ENCODE measurements at regions of chr4 and their contacts with region 1.

Region 1: GRCh38 chr4:4256799-4257198 is 8.8 kb upstream of the TMEM128 start:
- DNase-seq: peak in 1 of 5 donors; percentile 25
- H3K4me3 ChIP-seq: no peak overlapping the region
- H3K27ac ChIP-seq: no peak overlapping the region
- H3K4me1 ChIP-seq: no peaks in the 10 kb centered on the region
- H3K27me3 ChIP-seq: no peaks in the 10 kb centered on the region
- CTCF ChIP-seq: no peak
- EP300 ChIP-seq: no peak
- POLR2A ChIP-seq: no peak

Region 2: DNA sequence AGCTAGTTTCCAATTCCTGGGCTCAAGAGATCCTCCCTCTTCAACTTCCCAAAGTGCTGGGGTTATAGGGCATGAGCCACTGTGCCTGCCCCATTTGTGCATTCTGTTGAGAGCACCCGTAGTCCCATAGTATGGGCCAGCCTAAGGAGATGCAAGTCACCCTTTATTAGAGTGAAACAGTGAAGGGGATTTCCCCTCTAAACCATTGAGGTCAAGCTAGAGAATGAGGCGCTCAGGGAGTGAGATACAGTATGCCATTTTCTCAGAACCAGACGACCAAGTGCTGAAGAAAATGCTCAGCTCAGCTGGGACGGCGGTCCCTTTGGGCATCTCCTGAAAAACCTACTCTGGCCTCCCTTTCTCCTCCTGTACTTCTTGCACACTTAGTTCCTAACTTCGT is 1769.2 kb before region 1 on chr4:
- intact Hi-C with region 1: no loop called
- DNase-seq: no peak
- H3K4me3 ChIP-seq: no peak overlapping the region
- H3K27ac ChIP-seq: no peak overlapping the region
- H3K4me1 ChIP-seq: peaks cover 10% of the 10 kb centered on the region
- H3K27me3 ChIP-seq: no peaks in the 10 kb centered on the region
- CTCF ChIP-seq: no peak
- EP300 ChIP-seq: no peak
- POLR2A ChIP-seq: no peak

Region 3: GRCh38 chr4:4327652-4328121 is 70.9 kb after region 1 on chr4:
- intact Hi-C with region 1: loop called in 2 of 4 experiments (anchors 10 kb)
- DNase-seq: peak in 2 of 5 donors; percentile 26 to 36
- H3K4me3 ChIP-seq: no peak overlapping the region
- H3K27ac ChIP-seq: no peak overlapping the region
- H3K4me1 ChIP-seq: peaks cover 3% of the 10 kb centered on the region
- H3K27me3 ChIP-seq: no peaks in the 10 kb centered on the region
- CTCF ChIP-seq: no peak
- EP300 ChIP-seq: no peak
- POLR2A ChIP-seq: no peak

Region 4: DNA sequence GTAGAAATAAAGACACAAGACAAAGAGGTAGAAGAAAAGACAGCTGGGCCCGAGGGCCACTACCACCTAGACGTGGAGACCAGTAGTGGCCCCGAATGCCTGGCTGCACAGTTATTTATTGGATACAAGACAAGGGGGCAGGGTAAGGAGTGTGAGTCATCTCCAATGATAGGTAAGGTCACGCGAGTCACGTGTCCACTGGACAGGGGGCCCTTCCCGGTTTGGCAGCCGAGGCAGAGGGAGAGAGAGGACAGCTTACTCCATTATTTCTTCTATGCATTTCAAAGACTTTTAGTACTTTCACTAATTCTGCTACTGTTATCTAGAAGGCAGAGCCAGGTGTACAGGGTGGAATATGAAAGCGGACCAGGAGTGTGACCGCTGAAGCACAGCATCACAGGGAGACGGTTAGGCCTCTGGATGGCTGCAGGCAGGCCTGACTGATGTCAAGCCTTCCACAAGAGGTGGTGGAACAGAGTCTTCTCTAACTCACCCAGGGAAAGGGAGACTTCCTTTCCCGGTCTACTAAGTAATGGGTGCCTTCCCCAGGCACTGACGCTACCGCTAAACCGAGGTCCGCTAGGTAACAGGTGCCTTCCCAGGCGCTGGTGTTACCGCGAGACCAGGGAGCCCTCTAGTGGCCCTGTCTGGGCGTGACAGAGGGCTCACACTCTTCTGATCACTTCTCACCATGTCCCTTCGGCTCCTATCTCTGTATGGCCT is 78.2 kb after region 1 on chr4:
- intact Hi-C with region 1: loop called in 2 of 4 experiments (anchors 5 to 10 kb)
- DNase-seq: peak; percentile 57 to 81 (median 66)
- H3K4me3 ChIP-seq: no peak overlapping the region
- H3K27ac ChIP-seq: no peak overlapping the region
- H3K4me1 ChIP-seq: peaks cover 7% of the 10 kb centered on the region
- H3K27me3 ChIP-seq: no peaks in the 10 kb centered on the region
- CTCF ChIP-seq: peak; percentile 32 to 61 (median 60)
- EP300 ChIP-seq: no peak
- POLR2A ChIP-seq: no peak

Region 5: GRCh38 chr4:4430492-4431197 is 173.8 kb after region 1 on chr4:
- intact Hi-C with region 1: loop called in 2 of 4 experiments (anchors 10 kb)
- DNase-seq: peak in 1 of 5 donors; percentile 60
- H3K4me3 ChIP-seq: no peak overlapping the region
- H3K27ac ChIP-seq: no peak overlapping the region
- H3K4me1 ChIP-seq: peaks cover 5% of the 10 kb centered on the region
- H3K27me3 ChIP-seq: no peaks in the 10 kb centered on the region
- CTCF ChIP-seq: no peak
- EP300 ChIP-seq: no peak
- POLR2A ChIP-seq: no peak

Region 6: DNA sequence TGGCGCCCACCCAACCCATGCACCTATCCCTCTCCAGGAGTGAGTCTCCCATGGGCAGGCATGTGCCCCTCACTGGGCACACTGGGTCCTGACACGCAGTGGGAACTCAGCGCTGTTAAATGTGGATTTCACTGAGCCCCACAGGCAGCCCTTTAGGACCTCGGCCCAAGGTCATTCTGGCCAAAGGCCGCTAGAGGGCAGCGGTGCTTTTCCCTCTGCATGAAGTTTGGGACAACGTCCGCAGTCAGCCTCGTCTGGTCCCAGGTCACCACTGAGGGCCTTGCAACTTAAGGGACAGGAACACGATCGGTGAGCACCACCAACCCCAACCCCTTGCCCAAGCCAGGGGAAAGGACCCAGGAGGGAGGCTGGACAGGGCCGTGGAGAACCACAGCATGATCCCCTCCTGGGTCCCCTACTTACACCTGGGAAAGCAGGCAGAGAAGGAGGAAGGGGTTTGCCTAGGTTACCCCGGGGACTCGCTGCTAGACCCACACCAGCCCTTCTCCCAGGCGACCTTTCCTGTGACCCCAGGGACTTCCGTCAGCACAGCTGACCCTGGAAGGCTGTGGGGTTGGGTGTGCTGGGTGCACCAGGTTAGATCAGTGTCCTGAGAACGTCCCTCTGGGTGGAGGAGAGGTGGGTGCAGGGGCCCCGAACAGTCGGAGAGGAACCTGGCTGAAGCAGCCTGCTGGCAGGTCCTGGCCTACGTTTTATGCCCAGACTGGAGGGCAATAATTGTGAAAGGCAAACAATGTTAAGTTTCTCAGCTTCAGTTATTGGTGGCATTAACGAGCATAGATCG is 738.5 kb after region 1 on chr4:
- intact Hi-C with region 1: loop called in 1 of 4 experiments (anchors 10 kb)
- DNase-seq: peak; percentile 55 to 78 (median 70)
- H3K4me3 ChIP-seq: no peak overlapping the region
- H3K27ac ChIP-seq: no peak overlapping the region
- H3K4me1 ChIP-seq: peaks cover 11% of the 10 kb centered on the region
- H3K27me3 ChIP-seq: no peaks in the 10 kb centered on the region
- CTCF ChIP-seq: peak; percentile 54 to 59 (median 54)
- EP300 ChIP-seq: no peak
- POLR2A ChIP-seq: no peak